ENCODE measurements at regions of chr7 and their contacts with region 1.

Region 1: GRCh38 chr7:26187380-26188205 is 13.0 kb downstream of the HNRNPA2B1 start:
- DNase-seq: no peak
- H3K4me3 Mint-ChIP-seq: no peak overlapping the region
- H3K27ac Mint-ChIP-seq: peak overlapping the region; percentile 41
- H3K4me1 Mint-ChIP-seq: peaks cover 76% of the 10 kb centered on the region
- H3K27me3 Mint-ChIP-seq: no peaks in the 10 kb centered on the region
- CTCF ChIP-seq: no peak

Region 2: GRCh38 chr7:26090927-26091519 is 96.6 kb before region 1 on chr7:
- CTCF ChIA-PET with region 1: no interaction called
- intact Hi-C with region 1: loop called (anchors 2 kb)
- DNase-seq: peak; percentile 27
- H3K4me3 Mint-ChIP-seq: no peak overlapping the region
- H3K27ac Mint-ChIP-seq: no peak overlapping the region
- H3K4me1 Mint-ChIP-seq: peaks cover 23% of the 10 kb centered on the region
- H3K27me3 Mint-ChIP-seq: no peaks in the 10 kb centered on the region
- CTCF ChIP-seq: peak; percentile 87

Region 3: GRCh38 chr7:26543951-26544350 is 356.4 kb after region 1 on chr7:
- CTCF ChIA-PET with region 1: no interaction called
- intact Hi-C with region 1: loop called (anchors 5 kb)
- DNase-seq: no peak
- H3K4me3 Mint-ChIP-seq: no peak overlapping the region
- H3K27ac Mint-ChIP-seq: no peak overlapping the region
- H3K4me1 Mint-ChIP-seq: peaks cover 18% of the 10 kb centered on the region
- H3K27me3 Mint-ChIP-seq: no peaks in the 10 kb centered on the region
- CTCF ChIP-seq: no peak

Measured in Calu3 (cell line).